Heart left ventricle (tissue), 16 donors: ENCODE measurements at regions of chr3 and their contacts with region 1.

Region 1: DNA sequence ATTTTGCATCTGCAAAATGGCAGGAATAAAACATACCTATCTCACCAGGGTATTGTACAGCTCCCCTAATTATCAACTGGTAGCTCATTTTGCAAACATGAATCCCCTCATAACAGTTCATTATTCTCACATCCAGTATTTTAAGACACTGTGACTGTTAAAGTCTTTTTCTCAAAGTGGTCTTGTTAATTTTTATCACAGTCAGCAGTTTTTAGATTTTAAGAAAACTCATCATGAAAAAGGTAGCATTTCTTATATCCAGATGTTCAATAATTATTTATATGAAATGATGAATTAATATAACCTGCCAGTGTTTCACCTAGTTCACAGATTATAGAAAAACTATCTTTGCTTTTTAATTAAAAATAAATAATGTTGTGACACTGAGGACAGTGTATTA is 354.9 kb upstream of the ARL6 start:
- DNase-seq: no peak
- ATAC-seq: no peak
- H3K4me3 ChIP-seq: no peak overlapping the region
- H3K27ac ChIP-seq: no peak overlapping the region
- H3K4me1 ChIP-seq: no peaks in the 10 kb centered on the region
- H3K27me3 ChIP-seq: no peaks in the 10 kb centered on the region
- CTCF ChIP-seq: no peak
- POLR2A ChIP-seq: no peak

Region 2: DNA sequence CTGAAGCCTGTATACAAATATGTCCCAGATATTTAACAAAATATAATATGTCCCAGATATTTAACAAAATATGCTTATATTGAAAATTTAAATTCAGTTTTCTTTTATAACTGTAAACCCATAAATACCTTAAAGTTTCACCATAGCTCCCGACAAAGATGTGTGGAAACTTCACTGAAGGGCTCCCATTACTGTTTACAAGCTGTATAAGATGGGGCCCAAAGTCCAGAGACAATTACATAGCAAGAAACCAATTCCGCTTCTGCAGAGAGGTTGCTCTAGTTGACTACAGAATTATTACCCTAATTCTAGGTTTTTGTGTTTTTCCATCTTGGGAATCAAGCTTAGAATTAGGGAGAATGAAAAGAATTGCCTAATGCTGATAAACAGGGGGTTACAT is 697.8 kb before region 1 on chr3:
- intact Hi-C with region 1: loop called in 1 of 10 experiments (anchors 10 kb)
- DNase-seq: no peak
- ATAC-seq: no peak
- H3K4me3 ChIP-seq: no peak overlapping the region
- H3K27ac ChIP-seq: no peak overlapping the region
- H3K4me1 ChIP-seq: no peaks in the 10 kb centered on the region
- H3K27me3 ChIP-seq: no peaks in the 10 kb centered on the region
- CTCF ChIP-seq: no peak
- POLR2A ChIP-seq: no peak

Region 3: GRCh38 chr3:97264180-97264579 is 145.4 kb before region 1 on chr3:
- intact Hi-C with region 1: no loop called
- DNase-seq: no peak
- ATAC-seq: no peak
- H3K4me3 ChIP-seq: no peak overlapping the region
- H3K27ac ChIP-seq: no peak overlapping the region
- H3K4me1 ChIP-seq: no peaks in the 10 kb centered on the region
- H3K27me3 ChIP-seq: no peaks in the 10 kb centered on the region
- CTCF ChIP-seq: no peak
- POLR2A ChIP-seq: no peak